ENCODE measurements at regions of chr16 and their contacts with region 1.

Region 1: GRCh38 chr16:10509534-10510025 is 70.8 kb downstream of the EMP2 start:
- DNase-seq: peak; percentile 81 to 88 (median 85)
- H3K4me3 ChIP-seq: no peak overlapping the region
- H3K27ac ChIP-seq: no peak overlapping the region
- H3K4me1 ChIP-seq: peaks cover 0 to 3% (median 0%) of the 10 kb centered on the region in 4 experiments
- H3K27me3 ChIP-seq: no peaks in the 10 kb centered on the region

Region 2: GRCh38 chr16:10256784-10257641 is 252.6 kb before region 1 on chr16:
- CTCF ChIA-PET with region 1: interaction called, 16 read pairs
- POLR2A ChIA-PET with region 1: no interaction called
- DNase-seq: peak; percentile 25 to 63 (median 59)
- H3K4me3 ChIP-seq: peak overlapping the region in 1 of 7 experiments; percentile 38
- H3K27ac ChIP-seq: no peak overlapping the region
- H3K4me1 ChIP-seq: peaks cover 0 to 4% (median 0%) of the 10 kb centered on the region in 4 experiments
- H3K27me3 ChIP-seq: peaks cover 0 to 3% (median 0%) of the 10 kb centered on the region in 5 experiments

Region 3: DNA sequence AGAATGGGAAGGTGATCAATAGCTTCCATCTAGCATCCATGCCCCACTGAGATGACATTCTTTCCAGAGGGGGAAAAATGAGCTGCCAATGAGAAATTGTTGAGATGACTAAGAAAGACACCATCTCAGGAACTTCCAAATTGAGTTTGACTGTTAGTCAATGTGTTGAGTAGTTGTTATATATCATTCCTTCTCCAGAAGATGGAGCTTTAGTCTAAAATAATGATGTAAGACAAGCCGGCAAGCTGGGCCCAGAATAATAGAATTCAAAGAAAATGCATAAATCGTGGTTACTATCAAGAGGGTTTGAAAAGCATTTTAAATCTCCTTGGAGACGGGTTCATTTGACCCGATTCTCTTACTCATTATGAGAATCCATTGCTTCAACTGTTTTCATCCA is 194.8 kb before region 1 on chr16:
- CTCF ChIA-PET with region 1: interaction called, 103 read pairs
- POLR2A ChIA-PET with region 1: interaction called, 3 read pairs
- DNase-seq: peak; percentile 36 to 61 (median 58)
- H3K4me3 ChIP-seq: no peak overlapping the region
- H3K27ac ChIP-seq: no peak overlapping the region
- H3K4me1 ChIP-seq: no peaks in the 10 kb centered on the region
- H3K27me3 ChIP-seq: no peaks in the 10 kb centered on the region

Region 4: GRCh38 chr16:10521681-10522274 is 12.2 kb after region 1 on chr16:
- CTCF ChIA-PET with region 1: interaction called, 12 read pairs
- POLR2A ChIA-PET with region 1: no interaction called
- DNase-seq: peak; percentile 60 to 75 (median 70)
- H3K4me3 ChIP-seq: no peak overlapping the region
- H3K27ac ChIP-seq: no peak overlapping the region
- H3K4me1 ChIP-seq: no peaks in the 10 kb centered on the region
- H3K27me3 ChIP-seq: no peaks in the 10 kb centered on the region

Region 5: GRCh38 chr16:10737068-10737625 is 227.6 kb after region 1 on chr16:
- CTCF ChIA-PET with region 1: interaction called, 80 read pairs
- POLR2A ChIA-PET with region 1: no interaction called
- DNase-seq: peak; percentile 72 to 85 (median 79)
- H3K4me3 ChIP-seq: peak overlapping the region in 3 of 7 experiments; percentile 26 to 61 (median 58)
- H3K27ac ChIP-seq: no peak overlapping the region
- H3K4me1 ChIP-seq: peaks cover 0 to 11% (median 4%) of the 10 kb centered on the region in 4 experiments
- H3K27me3 ChIP-seq: no peaks in the 10 kb centered on the region

Region 6: GRCh38 chr16:10918294-10919002 is 408.9 kb after region 1 on chr16:
- CTCF ChIA-PET with region 1: interaction called, 17 read pairs
- POLR2A ChIA-PET with region 1: no interaction called
- DNase-seq: peak; percentile 91 to 95 (median 91)
- H3K4me3 ChIP-seq: no peak overlapping the region
- H3K27ac ChIP-seq: no peak overlapping the region
- H3K4me1 ChIP-seq: peaks cover 0 to 6% (median 0%) of the 10 kb centered on the region in 4 experiments
- H3K27me3 ChIP-seq: no peaks in the 10 kb centered on the region